Brain microvascular endothelial cell (primary cell): ENCODE measurements at regions of chr11 and their contacts with region 1.

Region 1: GRCh38 chr11:34926101-34926830 is 9.8 kb downstream of the PDHX start:
- DNase-seq: peak; percentile 24
- H3K4me3 ChIP-seq: no peak overlapping the region
- H3K27ac ChIP-seq: no peak overlapping the region
- H3K27me3 ChIP-seq: no peaks in the 10 kb centered on the region
- CTCF ChIP-seq: peak; percentile 49

Region 2: GRCh38 chr11:35391922-35392813 is 465.9 kb after region 1 on chr11:
- in situ Hi-C with region 1: loop called (anchors 25 kb)
- DNase-seq: peak; percentile 81
- H3K4me3 ChIP-seq: no peak overlapping the region
- H3K27ac ChIP-seq: no peak overlapping the region
- H3K27me3 ChIP-seq: no peaks in the 10 kb centered on the region
- CTCF ChIP-seq: peak; percentile 92